Activated CD4-positive, alpha-beta T cell treated with anti-CD3 and anti-CD28 coated beads, Interleukin-2, amount 10 ng/mL, durations not matched to agents 24 days and 14 days (primary cell): ENCODE measurements at regions of chrX and their contacts with region 1.

Region 1: GRCh38 chrX:19739683-19740082 is 147.7 kb downstream of the SH3KBP1 start:
- DNase-seq: peak; percentile 77
- H3K4me3 Mint-ChIP-seq: no peak overlapping the region
- H3K27ac Mint-ChIP-seq: peak overlapping the region; percentile 65
- H3K4me1 Mint-ChIP-seq: peaks cover 51% of the 10 kb centered on the region
- H3K27me3 Mint-ChIP-seq: no peaks in the 10 kb centered on the region

Region 2: DNA sequence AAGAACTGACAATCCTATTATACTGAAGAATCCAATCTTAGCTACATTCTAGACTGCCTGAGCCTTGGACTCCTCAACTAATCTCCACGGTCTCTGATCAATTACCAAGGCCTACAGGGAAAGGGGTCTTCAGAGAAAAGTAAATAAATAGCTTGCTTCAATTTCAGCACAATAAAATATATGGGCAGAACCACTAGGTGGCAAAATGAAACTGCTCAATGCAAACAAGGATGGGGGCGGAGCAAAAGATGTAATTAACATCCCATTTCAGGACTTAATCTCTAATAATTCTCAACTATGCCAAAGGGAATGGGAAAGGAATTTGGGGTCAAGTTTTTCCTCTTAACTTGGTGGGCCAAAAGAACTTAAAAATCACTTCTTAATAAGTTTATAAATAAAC is 146.0 kb before region 1 on chrX:
- intact Hi-C with region 1: loop called (anchors 10 kb)
- DNase-seq: peak; percentile 76
- H3K4me3 Mint-ChIP-seq: no peak overlapping the region
- H3K27ac Mint-ChIP-seq: no peak overlapping the region
- H3K4me1 Mint-ChIP-seq: peaks cover 9% of the 10 kb centered on the region
- H3K27me3 Mint-ChIP-seq: no peaks in the 10 kb centered on the region

Region 3: DNA sequence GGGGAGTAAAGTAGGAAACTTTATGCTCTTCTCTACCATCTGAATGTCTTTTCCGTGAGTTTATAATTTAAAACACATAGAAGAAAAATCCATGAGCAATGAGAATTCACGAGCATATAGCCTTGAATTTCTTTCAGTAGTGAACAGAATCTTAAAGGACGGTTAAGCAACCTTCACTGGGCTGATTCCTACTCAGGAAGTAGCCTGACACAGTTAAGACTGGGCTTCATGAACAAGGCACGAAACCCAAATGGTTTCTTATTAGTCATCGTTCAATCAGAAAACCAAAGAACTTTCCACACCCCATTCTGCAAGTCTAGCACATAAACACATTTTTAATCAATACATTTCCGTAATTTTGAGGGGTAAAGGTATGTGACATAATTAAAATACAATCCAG is 51.9 kb after region 1 on chrX:
- intact Hi-C with region 1: loop called (anchors 2 kb)
- DNase-seq: peak; percentile 68
- H3K4me3 Mint-ChIP-seq: peak overlapping the region; percentile 62
- H3K27ac Mint-ChIP-seq: peak overlapping the region; percentile 88
- H3K4me1 Mint-ChIP-seq: peaks cover 36% of the 10 kb centered on the region
- H3K27me3 Mint-ChIP-seq: no peaks in the 10 kb centered on the region